Endothelial cell of umbilical vein (primary cell): ENCODE measurements at regions of chr9 and their contacts with region 1.

Region 1: DNA sequence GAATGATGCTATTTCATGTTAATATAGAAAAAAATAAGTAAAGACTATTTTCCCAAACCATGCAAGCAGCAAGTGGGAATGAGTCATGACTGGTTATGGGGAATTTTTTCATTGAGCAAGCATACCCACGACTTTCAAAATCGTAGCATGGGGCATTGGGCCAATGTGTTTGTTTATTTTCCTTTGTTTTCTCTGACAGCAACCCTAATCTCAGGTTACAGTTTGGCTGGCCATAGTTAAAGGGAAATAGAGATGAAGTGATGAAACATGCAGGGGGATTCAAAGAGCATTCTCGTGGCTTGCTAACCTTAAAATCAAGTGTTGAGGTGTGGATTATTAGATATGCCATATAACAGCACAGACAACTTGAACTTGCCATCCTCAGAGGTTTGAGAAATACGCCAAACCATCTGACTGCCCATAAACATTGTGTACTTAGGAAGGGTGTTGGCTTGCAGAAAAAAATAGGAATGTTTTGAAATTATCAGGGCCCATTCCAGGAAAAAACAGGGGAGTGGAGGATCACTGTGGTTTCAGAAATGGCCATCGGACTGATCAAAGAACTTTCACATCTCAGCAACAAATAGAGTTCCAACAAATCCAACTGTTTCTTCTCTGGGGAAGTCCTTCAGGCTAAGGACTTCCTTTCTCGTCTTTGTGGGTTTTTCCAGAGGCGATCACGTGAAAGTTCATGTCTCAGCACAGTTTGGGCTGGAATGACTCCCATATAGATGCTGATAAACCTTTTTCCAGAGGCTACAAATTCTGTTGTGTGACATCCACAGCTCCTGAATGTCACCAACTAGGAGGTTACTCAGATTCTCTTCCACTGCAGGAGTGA is 259.1 kb downstream of the SYK start:
- DNase-seq: peak; percentile 98
- H3K4me3 ChIP-seq: peak overlapping the region in 1 of 3 experiments; percentile 2
- H3K27ac ChIP-seq: peak overlapping the region; percentile 68
- H3K4me1 ChIP-seq: peaks cover 43% of the 10 kb centered on the region
- H3K27me3 ChIP-seq: no peaks in the 10 kb centered on the region
- CTCF ChIP-seq: no peak
- POLR2A ChIP-seq: no peak

Region 2: GRCh38 chr9:91045041-91045440 is 15.7 kb before region 1 on chr9:
- CTCF ChIA-PET with region 1: no interaction called
- POLR2A ChIA-PET with region 1: no interaction called
- dilution Hi-C with region 1: no loop called
- intact Hi-C with region 1: no loop called
- DNase-seq: no peak
- H3K4me3 ChIP-seq: no peak overlapping the region
- H3K27ac ChIP-seq: no peak overlapping the region
- H3K4me1 ChIP-seq: peaks cover 12% of the 10 kb centered on the region
- H3K27me3 ChIP-seq: no peaks in the 10 kb centered on the region
- CTCF ChIP-seq: no peak
- POLR2A ChIP-seq: no peak

Region 3: DNA sequence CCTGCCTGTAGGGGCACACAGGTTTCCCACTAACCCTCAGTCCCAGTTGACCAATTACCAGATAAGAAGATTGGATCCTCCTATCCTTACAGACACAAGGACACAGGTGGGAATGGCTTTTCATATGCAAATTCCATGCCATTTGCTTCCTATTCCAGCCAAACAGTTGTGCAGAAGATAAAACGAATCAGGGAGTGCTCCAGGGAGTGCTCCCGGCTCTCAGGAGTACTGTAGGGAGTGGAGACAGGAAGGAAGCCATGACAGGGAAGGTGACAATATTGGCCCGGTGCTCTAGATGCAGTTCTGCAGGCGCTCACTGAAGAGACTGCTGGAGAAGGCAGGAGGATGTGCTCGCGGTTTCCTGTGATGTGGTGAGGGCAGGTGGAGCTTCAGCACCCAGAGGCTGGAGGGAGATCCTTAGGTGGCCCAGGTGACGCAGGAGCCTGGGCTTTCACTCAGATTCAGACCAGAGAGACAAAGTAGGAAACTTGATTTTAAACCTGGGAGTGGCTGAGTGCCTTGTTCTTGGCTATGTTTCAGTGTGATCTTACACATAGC is 41.0 kb after region 1 on chr9:
- CTCF ChIA-PET with region 1: no interaction called
- POLR2A ChIA-PET with region 1: no interaction called
- dilution Hi-C with region 1: no loop called
- intact Hi-C with region 1: loop called (anchors 2 kb)
- DNase-seq: no peak
- H3K4me3 ChIP-seq: no peak overlapping the region
- H3K27ac ChIP-seq: no peak overlapping the region
- H3K4me1 ChIP-seq: peaks cover 2% of the 10 kb centered on the region
- H3K27me3 ChIP-seq: peaks cover 0 to 8% of the 10 kb centered on the region in 2 experiments
- CTCF ChIP-seq: no peak
- POLR2A ChIP-seq: no peak

Region 4: GRCh38 chr9:91117959-91118703 is 57.4 kb after region 1 on chr9:
- CTCF ChIA-PET with region 1: no interaction called
- POLR2A ChIA-PET with region 1: no interaction called
- dilution Hi-C with region 1: no loop called
- intact Hi-C with region 1: loop called (anchors 5 kb)
- DNase-seq: peak; percentile 32
- H3K4me3 ChIP-seq: peak overlapping the region in 2 of 3 experiments; percentile 4 to 18
- H3K27ac ChIP-seq: no peak overlapping the region
- H3K4me1 ChIP-seq: peaks cover 2% of the 10 kb centered on the region
- H3K27me3 ChIP-seq: peaks cover 2 to 5% of the 10 kb centered on the region in 2 experiments
- CTCF ChIP-seq: no peak
- POLR2A ChIP-seq: no peak

Region 5: DNA sequence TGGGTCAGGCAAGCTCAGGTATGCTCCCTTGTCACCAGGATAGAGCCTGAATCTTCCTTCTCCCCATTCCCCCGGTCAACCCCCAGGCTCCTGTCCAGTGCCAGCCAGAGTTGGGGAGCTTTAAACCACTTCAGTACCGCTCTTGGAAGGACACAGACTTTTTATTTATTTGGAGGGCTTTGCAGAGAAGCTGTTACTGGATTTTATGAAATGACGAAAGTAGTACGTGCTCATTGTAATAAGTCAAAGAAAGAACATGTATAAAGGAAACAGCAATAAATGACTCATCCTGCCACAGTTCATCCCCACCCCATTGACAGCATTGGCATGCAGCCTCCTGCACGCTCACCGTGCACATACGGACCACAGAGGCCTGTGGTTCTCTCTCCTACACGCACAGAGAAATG is 70.7 kb after region 1 on chr9:
- CTCF ChIA-PET with region 1: interaction called, 4 read pairs
- POLR2A ChIA-PET with region 1: no interaction called
- dilution Hi-C with region 1: no loop called
- intact Hi-C with region 1: loop called (anchors 2 kb)
- DNase-seq: peak; percentile 72
- H3K4me3 ChIP-seq: no peak overlapping the region
- H3K27ac ChIP-seq: peak overlapping the region; percentile 16
- H3K4me1 ChIP-seq: peaks cover 9% of the 10 kb centered on the region
- H3K27me3 ChIP-seq: no peaks in the 10 kb centered on the region
- CTCF ChIP-seq: no peak
- POLR2A ChIP-seq: no peak

Region 6: DNA sequence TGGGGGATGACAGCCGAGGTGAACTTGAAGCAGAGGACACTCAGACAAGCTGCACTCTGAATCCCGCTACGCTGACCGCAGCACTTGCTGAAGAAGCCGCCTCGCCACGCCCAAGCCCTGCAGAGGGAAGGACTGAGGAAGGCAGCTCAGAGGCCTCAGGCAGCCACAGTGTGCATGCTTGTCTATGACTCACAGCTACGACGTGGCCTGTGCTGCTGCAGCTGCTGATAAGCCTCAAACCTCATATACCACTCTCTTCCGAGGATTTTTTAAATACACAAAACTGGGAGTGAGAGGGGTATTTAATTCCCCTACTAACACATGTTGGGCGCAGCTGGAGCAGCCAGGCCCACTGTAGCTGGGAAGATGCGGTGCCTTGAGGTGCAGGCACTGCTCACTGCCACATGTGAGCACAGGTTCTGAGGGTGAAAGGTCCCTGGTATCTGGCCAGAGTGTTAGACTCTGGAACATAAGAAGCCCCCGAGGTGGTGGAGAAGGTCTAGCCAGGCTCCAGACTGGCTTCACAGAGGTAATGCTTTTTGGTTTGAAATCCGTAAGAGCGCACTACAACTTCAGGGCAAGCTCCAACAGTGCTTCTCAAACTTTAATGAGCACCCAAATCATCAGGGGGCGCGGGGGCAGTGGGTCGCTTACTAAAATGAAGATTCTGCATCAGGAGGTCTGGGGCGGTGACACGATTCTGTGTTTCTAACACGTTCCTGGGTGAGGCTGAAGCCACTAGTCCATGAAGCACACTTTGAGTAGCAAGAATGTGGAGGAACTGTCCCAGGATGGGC is 104.2 kb after region 1 on chr9:
- CTCF ChIA-PET with region 1: no interaction called
- POLR2A ChIA-PET with region 1: no interaction called
- dilution Hi-C with region 1: no loop called
- intact Hi-C with region 1: loop called (anchors 5 kb)
- DNase-seq: peak; percentile 69
- H3K4me3 ChIP-seq: no peak overlapping the region
- H3K27ac ChIP-seq: peak overlapping the region; percentile 14
- H3K4me1 ChIP-seq: peaks cover 15% of the 10 kb centered on the region
- H3K27me3 ChIP-seq: no peaks in the 10 kb centered on the region
- CTCF ChIP-seq: no peak
- POLR2A ChIP-seq: no peak

Region 7: DNA sequence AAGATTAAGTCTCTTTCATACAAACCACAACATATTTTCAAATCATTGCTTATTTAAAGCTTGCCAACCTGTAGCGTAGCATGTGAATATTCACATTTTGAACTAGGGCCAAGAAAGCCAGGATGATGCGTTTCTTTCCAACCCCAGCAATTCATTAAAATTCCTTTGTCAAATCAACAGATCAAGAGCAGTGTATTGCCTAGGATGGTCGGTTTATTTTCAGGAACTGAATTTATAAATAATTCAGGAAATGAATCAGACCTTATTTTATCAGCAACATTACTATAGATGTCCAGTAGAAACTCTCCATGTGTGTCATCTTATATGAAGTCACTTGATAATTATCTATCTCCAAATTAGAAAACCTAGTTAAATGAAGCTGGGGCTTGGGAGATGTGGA is 314.2 kb after region 1 on chr9:
- CTCF ChIA-PET with region 1: no interaction called
- POLR2A ChIA-PET with region 1: no interaction called
- dilution Hi-C with region 1: no loop called
- intact Hi-C with region 1: loop called (anchors 5 kb)
- DNase-seq: peak; percentile 60
- H3K4me3 ChIP-seq: no peak overlapping the region
- H3K27ac ChIP-seq: no peak overlapping the region
- H3K4me1 ChIP-seq: peaks cover 20% of the 10 kb centered on the region
- H3K27me3 ChIP-seq: no peaks in the 10 kb centered on the region
- CTCF ChIP-seq: no peak
- POLR2A ChIP-seq: no peak